H1 (cell line): ENCODE measurements at regions of chr10 and their contacts with region 1.

Region 1: DNA sequence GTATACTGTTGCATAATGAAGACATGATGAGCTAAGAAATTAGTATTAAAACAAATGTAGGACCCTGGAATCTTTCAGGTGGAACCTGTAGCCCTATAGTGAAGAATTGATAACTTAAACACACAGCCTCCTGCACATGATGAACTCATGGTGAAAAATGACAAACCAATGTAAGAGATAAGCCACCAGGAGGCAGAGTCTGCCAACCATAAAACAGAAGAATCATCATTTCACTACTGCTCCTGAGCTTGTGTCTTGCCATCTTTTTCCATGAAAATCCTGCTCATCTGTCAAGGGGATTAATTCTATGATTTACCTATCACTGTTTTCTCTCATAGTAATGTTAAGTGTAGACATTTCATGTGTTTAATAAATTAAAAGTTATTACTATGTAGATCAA is 363.9 kb downstream of the MALRD1 start:
- DNase-seq: no peak
- H3K4me3 ChIP-seq: no peak overlapping the region
- H3K27ac ChIP-seq: no peak overlapping the region
- H3K4me1 ChIP-seq: peaks cover 1 to 7% (median 3%) of the 10 kb centered on the region in 4 experiments; a peak in 5 of 7 replicates
- H3K27me3 ChIP-seq: no peaks in the 10 kb centered on the region
- CTCF ChIP-seq: peak in 2 of 3 experiments; percentile 53 to 68; a peak in 2 of 4 replicates
- EP300 ChIP-seq: no peak
- POLR2A ChIP-seq: no peak
- RAD21 ChIP-seq: peak; percentile 89 to 90

Region 2: GRCh38 chr10:19431622-19432351 is 19.3 kb after region 1 on chr10:
- CTCF ChIA-PET with region 1: interaction called, 10 read pairs
- POLR2A ChIA-PET with region 1: no interaction called
- DNase-seq: no peak
- H3K4me3 ChIP-seq: no peak overlapping the region
- H3K27ac ChIP-seq: no peak overlapping the region
- H3K4me1 ChIP-seq: no peaks in the 10 kb centered on the region
- H3K27me3 ChIP-seq: no peaks in the 10 kb centered on the region
- CTCF ChIP-seq: no peak
- EP300 ChIP-seq: no peak
- POLR2A ChIP-seq: no peak
- RAD21 ChIP-seq: no peak

Region 3: DNA sequence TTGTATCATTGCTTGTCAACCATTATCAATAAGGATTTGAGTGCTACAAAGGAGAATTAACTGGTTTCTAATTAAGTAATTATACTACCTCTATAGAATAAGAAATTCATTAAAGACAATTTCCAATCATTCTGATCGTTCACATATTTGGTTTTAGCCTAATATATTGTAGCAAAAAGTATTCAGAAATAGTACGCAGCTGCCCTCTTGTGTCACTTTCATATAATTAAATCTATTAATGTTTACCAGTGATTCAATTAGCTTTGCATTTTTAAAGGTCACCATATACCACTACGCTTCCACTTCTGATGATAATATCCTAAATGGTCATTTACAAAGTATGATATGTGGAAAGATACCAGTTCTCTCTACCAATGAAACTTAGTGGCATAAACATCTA is 1356.3 kb after region 1 on chr10:
- CTCF ChIA-PET with region 1: interaction called, 12 read pairs
- POLR2A ChIA-PET with region 1: no interaction called
- DNase-seq: no peak
- H3K4me3 ChIP-seq: no peak overlapping the region
- H3K27ac ChIP-seq: no peak overlapping the region
- H3K4me1 ChIP-seq: no peaks in the 10 kb centered on the region
- H3K27me3 ChIP-seq: no peaks in the 10 kb centered on the region
- CTCF ChIP-seq: peak in 1 of 3 experiments; percentile 16; a peak in 1 of 4 replicates
- EP300 ChIP-seq: no peak
- POLR2A ChIP-seq: no peak
- RAD21 ChIP-seq: peak in 1 of 2 experiments; percentile 74